MCF 10A (cell line): ENCODE measurements at regions of chr1 and their contacts with region 1.

Region 1: DNA sequence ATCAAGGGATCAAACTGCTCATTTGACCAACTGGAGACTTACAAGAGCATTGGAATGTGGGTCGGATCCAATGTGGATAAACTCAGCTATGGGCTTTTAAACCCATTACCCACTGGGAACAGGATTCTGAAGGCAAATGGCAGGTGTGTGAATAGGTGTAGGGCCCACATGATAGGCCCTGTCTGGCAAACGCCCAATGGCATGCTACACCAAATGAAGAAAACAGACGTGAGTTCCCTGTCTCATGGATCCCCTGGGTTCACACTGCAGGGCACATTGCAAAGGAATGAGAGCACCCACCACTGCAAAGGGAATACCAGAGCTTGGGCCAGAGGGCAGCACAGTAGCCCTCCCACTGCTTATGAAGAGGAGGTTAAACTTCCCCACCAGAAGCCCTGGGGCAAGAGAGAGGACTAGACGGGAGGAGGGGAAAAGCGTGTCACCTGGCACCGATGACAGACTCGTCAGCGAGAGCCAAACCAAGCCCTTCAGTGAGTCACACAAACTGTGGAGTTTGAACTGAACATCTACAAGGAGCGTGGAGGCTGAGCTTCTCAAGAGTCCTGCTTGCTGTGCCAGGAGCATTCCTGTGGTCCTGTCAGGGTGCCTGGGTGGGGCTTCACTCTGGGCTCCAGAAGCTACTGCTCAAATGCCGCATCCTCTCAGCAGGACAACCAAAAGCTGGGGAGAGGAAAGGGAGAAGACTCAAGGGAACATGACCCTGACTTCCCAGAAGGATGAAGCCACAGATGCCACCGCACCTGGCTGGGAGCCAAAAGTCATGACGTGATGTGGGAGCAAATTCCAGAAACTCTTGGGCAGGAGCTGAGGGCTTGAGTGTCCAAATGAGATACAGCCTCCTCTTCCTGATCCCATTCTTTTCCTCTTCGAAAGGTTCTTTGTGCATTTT is 61.1 kb downstream of the TOMM20 start:
- DNase-seq: peak; percentile 100
- H3K4me3 Mint-ChIP-seq: peak overlapping the region; percentile 54
- H3K27ac Mint-ChIP-seq: peak overlapping the region; percentile 97
- H3K4me1 Mint-ChIP-seq: peaks cover 53% of the 10 kb centered on the region
- H3K27me3 Mint-ChIP-seq: no peaks in the 10 kb centered on the region
- CTCF ChIP-seq: no peak

Region 2: GRCh38 chr1:234478481-234479309 is 588.8 kb before region 1 on chr1 and contains the start of gene TARBP1:
- CTCF ChIA-PET with region 1: no interaction called
- POLR2A ChIA-PET with region 1: interaction called, 12 read pairs
- intact Hi-C with region 1: no loop called
- DNase-seq: peak; percentile 89
- H3K4me3 Mint-ChIP-seq: peak within 1 kb of the TSS; percentile 77
- H3K27ac Mint-ChIP-seq: no peak within 1 kb of the TSS
- H3K4me1 Mint-ChIP-seq: peaks cover 31% of the 10 kb centered on the region
- H3K27me3 Mint-ChIP-seq: peaks cover 23% of the 10 kb centered on the region
- CTCF ChIP-seq: no peak
- total RNA-seq, gene TARBP1: 45.5 and 52.5 TPM in 2 replicates

Region 3: DNA sequence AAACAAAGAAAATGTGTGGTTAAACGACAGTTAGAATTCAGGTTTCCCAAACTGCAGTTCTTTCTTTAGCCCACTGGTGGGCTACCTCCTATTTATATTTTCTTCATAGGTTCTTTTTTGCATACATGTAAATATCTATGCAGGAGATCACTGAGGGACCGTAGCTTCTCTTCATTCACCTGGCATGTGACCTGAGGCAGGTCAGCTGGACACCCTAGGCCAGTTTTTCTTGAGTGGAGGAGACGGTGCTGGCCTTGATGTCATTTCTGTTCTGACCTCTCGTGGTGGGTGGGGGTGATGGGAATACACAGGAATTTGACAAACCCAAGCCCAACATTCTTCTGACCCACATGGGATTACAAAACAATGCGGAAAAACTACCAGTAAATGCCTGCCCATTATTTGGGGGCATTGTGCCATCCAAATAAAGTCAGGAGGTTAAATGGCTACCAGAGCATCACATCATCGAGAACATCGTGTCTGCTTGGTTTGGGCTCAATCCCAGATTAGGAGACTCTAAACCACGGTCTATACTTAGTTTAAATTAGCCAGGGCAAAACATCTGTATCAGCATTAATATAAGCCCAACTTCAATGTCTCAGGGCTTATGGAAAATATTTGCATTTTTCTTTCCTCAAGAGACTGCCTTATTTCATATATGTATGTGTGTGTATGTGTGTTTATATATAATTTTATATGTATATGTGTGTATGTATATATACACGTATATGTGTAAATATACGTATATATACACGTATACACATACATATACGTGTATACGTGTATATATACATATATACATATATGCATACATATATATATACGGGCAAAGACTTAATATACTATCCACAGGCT is 450.2 kb before region 1 on chr1:
- CTCF ChIA-PET with region 1: interaction called, 18 read pairs
- POLR2A ChIA-PET with region 1: interaction called, 406 read pairs
- intact Hi-C with region 1: no loop called
- DNase-seq: peak; percentile 80
- H3K4me3 Mint-ChIP-seq: no peak overlapping the region
- H3K27ac Mint-ChIP-seq: peak overlapping the region; percentile 99
- H3K4me1 Mint-ChIP-seq: peaks cover 70% of the 10 kb centered on the region
- H3K27me3 Mint-ChIP-seq: no peaks in the 10 kb centered on the region
- CTCF ChIP-seq: peak; percentile 28

Region 4: DNA sequence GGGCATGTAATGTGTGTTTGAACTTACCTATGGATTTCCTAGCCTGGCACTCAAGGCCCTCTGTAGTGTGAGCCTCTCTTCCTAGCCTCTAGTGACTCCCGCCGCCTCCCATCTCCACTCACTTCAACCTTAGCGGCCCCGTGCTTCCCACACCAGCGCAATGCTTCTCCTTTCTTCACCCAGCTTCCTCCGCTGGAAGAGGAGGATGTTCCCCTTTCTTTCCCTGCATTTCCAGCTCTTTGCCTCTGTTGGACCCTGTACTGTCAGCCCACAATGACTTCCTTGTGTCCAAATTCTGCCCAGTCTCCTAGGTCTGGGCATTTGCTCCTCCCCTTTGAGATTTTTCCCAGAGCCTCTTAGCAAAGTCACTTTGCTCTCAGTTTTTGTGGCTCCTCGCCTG is 319.5 kb before region 1 on chr1:
- CTCF ChIA-PET with region 1: no interaction called
- POLR2A ChIA-PET with region 1: no interaction called
- intact Hi-C with region 1: no loop called
- DNase-seq: no peak
- H3K4me3 Mint-ChIP-seq: no peak overlapping the region
- H3K27ac Mint-ChIP-seq: no peak overlapping the region
- H3K4me1 Mint-ChIP-seq: peaks cover 11% of the 10 kb centered on the region
- H3K27me3 Mint-ChIP-seq: no peaks in the 10 kb centered on the region
- CTCF ChIP-seq: no peak

Region 5: DNA sequence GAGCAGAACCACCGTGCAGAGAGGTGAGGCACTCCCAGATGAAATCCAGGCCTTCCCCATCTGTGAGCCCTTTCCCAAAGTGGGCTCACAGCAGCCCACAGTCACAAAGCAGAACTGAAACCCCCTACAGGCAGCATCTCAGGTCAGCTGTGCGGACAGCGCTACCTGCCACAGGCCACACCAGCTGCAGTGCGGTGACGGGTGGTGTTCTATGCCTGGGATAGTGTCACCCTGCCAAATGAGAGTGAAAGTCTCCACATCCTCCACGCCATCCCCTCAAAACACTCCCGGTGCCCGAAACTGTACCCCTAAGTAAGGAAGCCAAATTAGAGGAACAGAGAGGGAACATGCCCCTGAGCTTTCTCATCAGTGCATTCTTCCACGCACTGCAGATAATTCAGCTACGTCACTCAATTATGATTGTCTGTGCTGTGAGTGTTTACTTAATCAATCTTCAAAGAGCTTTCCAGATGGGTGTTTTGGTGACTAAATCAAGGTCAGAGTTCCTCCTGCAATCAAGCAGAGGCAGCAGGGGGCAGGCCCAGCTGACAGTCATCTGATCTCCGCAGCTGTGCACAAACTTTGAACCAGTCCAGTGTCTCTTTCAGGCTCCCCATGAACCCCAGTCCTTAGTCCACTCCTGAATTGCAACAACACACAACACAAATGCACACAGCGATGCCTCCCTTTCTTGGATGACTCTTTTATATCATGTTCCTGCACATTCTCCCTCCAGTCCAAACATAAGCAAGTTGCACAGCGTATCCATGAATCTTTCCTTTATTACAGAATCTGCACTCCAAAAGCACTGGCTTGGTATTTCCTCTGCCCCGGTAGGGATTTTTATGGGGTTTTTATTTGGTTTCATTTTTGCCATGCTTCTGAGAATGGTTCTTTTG is 88.9 kb before region 1 on chr1:
- CTCF ChIA-PET with region 1: no interaction called
- POLR2A ChIA-PET with region 1: interaction called, 10 read pairs
- intact Hi-C with region 1: no loop called
- DNase-seq: peak; percentile 68
- H3K4me3 Mint-ChIP-seq: peak overlapping the region; percentile 20
- H3K27ac Mint-ChIP-seq: peak overlapping the region; percentile 96
- H3K4me1 Mint-ChIP-seq: peaks cover 50% of the 10 kb centered on the region
- H3K27me3 Mint-ChIP-seq: no peaks in the 10 kb centered on the region
- CTCF ChIP-seq: no peak

Region 6: DNA sequence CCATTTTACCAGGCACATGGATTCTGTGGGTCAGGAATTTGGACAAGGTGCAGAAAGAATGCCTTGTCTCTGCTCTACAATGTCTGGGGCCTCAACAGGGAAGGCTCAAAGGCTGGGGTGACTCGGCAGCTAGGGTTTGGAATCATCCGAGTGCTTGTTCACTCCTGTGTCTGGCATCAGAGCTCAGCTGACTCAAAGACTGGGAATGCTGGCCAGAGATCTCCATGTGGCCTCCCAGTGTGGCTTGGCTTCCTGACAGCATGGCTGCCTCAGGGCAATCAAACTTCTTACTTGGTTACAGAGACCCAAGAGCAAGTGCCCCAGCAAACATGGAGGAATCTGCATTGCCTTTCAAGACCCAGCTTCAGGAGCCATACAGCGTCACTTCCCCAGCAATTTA is 49.4 kb before region 1 on chr1:
- CTCF ChIA-PET with region 1: interaction called, 4 read pairs
- POLR2A ChIA-PET with region 1: interaction called, 46 read pairs
- intact Hi-C with region 1: no loop called
- DNase-seq: peak; percentile 100
- H3K4me3 Mint-ChIP-seq: no peak overlapping the region
- H3K27ac Mint-ChIP-seq: peak overlapping the region; percentile 0
- H3K4me1 Mint-ChIP-seq: peaks cover 25% of the 10 kb centered on the region
- H3K27me3 Mint-ChIP-seq: no peaks in the 10 kb centered on the region
- CTCF ChIP-seq: no peak